AG04450 (cell line): ENCODE measurements at regions of chr2 and their contacts with region 1.

Region 1: GRCh38 chr2:85728883-85729824 is 24.6 kb upstream of the ATOH8 start:
- DNase-seq: no peak
- H3K4me3 ChIP-seq: no peak overlapping the region
- H3K27ac ChIP-seq: no peak overlapping the region
- H3K27me3 ChIP-seq: peaks cover 10% of the 10 kb centered on the region
- CTCF ChIP-seq: peak; percentile 100

Region 2: DNA sequence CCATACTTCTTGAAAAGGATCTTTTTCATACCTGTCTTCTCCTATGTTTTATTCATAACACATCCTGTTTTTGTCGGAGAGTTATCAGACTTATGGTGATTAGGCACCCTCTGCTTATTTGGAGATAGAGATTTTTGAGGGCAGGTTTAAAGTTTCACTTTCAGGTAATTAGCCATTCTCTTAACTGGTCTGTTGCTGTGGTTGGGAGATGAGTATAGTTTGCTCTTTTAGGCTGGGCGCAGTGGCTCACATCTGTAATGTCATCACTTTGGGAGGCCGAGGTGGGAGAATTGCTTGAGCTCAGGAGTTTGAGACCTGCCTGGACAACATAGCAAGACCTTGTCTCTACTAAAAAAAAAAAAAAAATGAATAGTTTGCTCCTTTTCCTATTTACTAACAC is 86.4 kb before region 1 on chr2:
- CTCF ChIA-PET with region 1: interaction called, 26 read pairs
- POLR2A ChIA-PET with region 1: no interaction called
- DNase-seq: no peak
- H3K4me3 ChIP-seq: no peak overlapping the region
- H3K27ac ChIP-seq: no peak overlapping the region
- H3K27me3 ChIP-seq: no peaks in the 10 kb centered on the region
- CTCF ChIP-seq: no peak

Region 3: GRCh38 chr2:85712849-85713602 is 16.1 kb before region 1 on chr2:
- CTCF ChIA-PET with region 1: interaction called, 39 read pairs
- POLR2A ChIA-PET with region 1: no interaction called
- DNase-seq: no peak
- H3K4me3 ChIP-seq: no peak overlapping the region
- H3K27ac ChIP-seq: no peak overlapping the region
- H3K27me3 ChIP-seq: peaks cover 5% of the 10 kb centered on the region
- CTCF ChIP-seq: no peak

Region 4: DNA sequence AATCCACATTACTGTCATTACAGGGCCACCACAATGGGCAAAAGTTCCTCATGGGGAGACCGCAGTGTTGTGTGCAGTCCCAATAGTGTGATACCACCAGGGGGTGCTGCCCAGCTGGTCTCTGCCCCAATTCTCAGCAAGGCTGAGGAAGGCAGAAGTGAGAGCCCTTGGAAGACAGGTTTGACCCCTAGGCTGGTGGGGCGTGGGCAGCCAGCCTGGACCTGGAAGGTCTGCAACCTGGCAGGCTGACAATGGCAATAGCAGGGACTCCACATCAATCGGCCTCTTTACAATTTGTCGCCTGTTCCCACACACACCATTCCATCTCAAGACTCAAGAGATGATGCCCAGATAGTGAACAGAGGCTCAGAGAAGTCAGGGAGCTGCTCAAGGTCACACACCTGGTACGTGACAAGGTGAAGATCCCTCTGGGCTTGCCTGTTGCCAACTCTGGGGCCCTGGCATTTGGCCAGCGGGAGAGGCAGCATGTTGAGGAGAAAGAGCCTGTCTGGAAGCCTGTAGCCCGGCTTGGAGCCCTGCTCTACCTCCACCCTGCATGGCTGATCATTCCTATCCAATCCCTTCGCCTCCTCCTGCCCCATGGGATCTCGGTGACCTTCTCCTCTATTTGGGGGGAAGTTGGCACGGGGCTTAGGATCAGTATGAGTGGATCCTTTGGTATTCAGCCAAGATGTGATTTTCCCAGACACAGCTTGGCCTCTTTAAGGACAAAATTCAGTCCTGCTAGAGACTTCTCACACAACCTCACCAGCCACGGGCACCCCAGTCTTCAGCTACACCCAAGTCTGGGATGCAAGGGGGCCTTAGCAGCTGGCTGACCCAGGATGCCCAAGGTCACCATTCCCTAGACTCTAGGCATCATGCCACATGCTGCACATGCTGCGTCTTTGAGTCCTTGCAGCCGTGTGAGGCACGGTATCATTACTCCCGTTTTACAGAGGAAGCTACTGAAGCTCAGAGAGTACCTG is 21.7 kb after region 1 on chr2:
- CTCF ChIA-PET with region 1: interaction called, 25 read pairs
- POLR2A ChIA-PET with region 1: no interaction called
- DNase-seq: no peak
- H3K4me3 ChIP-seq: no peak overlapping the region
- H3K27ac ChIP-seq: no peak overlapping the region
- H3K27me3 ChIP-seq: peaks cover 5% of the 10 kb centered on the region
- CTCF ChIP-seq: peak; percentile 86

Region 5: DNA sequence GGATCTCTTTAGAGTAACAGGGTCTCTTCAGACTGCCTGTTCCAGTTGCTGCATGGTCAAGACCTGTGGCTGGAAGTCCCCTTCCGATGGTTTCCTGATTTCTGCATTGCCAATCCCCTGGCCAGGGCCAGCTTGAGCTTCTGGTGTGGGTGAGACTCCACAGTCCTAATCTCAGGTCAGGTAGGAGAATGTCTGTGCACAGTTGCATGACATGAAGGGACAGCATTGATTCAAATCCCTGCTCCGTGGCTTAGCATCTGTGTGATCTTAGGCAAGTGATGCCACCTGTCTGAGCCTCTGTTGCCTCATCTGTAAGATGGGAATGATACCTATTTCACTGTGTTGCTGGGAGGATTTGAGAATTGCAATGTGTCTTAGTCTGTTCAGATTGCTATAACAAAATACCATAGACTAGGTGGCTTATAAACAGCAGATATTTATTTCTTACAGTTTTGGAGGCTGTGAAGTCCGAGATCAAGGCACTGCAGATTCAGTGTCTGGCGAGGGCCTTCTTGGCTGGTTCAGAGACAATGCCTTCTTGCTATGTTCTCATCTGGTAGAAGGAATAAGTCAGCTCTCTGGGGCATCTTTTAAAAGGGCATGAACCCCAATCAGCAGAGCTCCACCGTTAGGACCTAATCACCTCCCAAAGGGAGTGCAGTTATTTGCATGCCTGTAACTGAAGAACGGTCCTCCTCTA is 90.8 kb after region 1 on chr2:
- CTCF ChIA-PET with region 1: interaction called, 203 read pairs
- POLR2A ChIA-PET with region 1: no interaction called
- DNase-seq: no peak
- H3K4me3 ChIP-seq: no peak overlapping the region
- H3K27ac ChIP-seq: no peak overlapping the region
- H3K27me3 ChIP-seq: peaks cover 5% of the 10 kb centered on the region
- CTCF ChIP-seq: no peak